GM12878 (cell line): ENCODE measurements at regions of chr7 and their contacts with region 1.

Region 1: GRCh38 chr7:32803406-32804141 is 88.0 kb downstream of the KBTBD2 start:
- DNase-seq: no peak
- ATAC-seq: no peak
- H3K4me3 ChIP-seq: no peak overlapping the region
- H3K27ac ChIP-seq: no peak overlapping the region
- H3K4me1 ChIP-seq: no peaks in the 10 kb centered on the region
- H3K27me3 ChIP-seq: no peaks in the 10 kb centered on the region
- CTCF ChIP-seq: no peak
- EP300 ChIP-seq: no peak
- POLR2A ChIP-seq: no peak
- RAD21 ChIP-seq: no peak

Region 2: GRCh38 chr7:32942786-32943653 is 139.4 kb after region 1 on chr7:
- CTCF ChIA-PET with region 1: interaction called, 8 read pairs
- POLR2A ChIA-PET with region 1: no interaction called
- RAD21 ChIA-PET with region 1: interaction called, 6 read pairs
- SMC1A ChIA-PET with region 1: no interaction called
- in situ Hi-C with region 1: no loop called
- intact Hi-C with region 1: loop called (anchors 1 kb)
- DNase-seq: no peak
- ATAC-seq: peak; percentile 96
- H3K4me3 ChIP-seq: peak overlapping the region; percentile 86
- H3K27ac ChIP-seq: peak overlapping the region; percentile 46; the same call in 1 of the 2 replicates
- H3K4me1 ChIP-seq: no peaks in the 10 kb centered on the region; the same call in none of the 2 replicates
- H3K27me3 ChIP-seq: no peaks in the 10 kb centered on the region; a peak in 1 of 4 replicates
- CTCF ChIP-seq: peak; percentile 56 to 78 (median 64); a peak in 5 of 6 replicates
- EP300 ChIP-seq: no peak
- POLR2A ChIP-seq: peak; percentile 42
- RAD21 ChIP-seq: peak; percentile 78